Activated CD4-positive, alpha-beta memory T cell treated with anti-CD3 and anti-CD28 coated beads, Interleukin-2, amount 10 ng/mL, durations not matched to agents 7 days and 5 days (primary cell): ENCODE measurements at regions of chr9 and their contacts with region 1.

Region 1: GRCh38 chr9:137034863-137035761 is 3.2 kb upstream of the FUT7 start:
- DNase-seq: peak; percentile 90
- H3K4me3 Mint-ChIP-seq: peak overlapping the region; percentile 64
- H3K27ac Mint-ChIP-seq: peak overlapping the region; percentile 98
- H3K4me1 Mint-ChIP-seq: peaks cover 48% of the 10 kb centered on the region
- H3K27me3 Mint-ChIP-seq: no peaks in the 10 kb centered on the region

Region 2: GRCh38 chr9:136327313-136327974 is 707.7 kb before region 1 on chr9 and contains the start of gene GPSM1:
- CTCF ChIA-PET with region 1: no interaction called
- POLR2A ChIA-PET with region 1: no interaction called
- DNase-seq: peak; percentile 32
- H3K4me3 Mint-ChIP-seq: peak within 1 kb of the TSS; percentile 51
- H3K27ac Mint-ChIP-seq: no peak within 1 kb of the TSS
- H3K4me1 Mint-ChIP-seq: peaks cover 5% of the 10 kb centered on the region
- H3K27me3 Mint-ChIP-seq: no peaks in the 10 kb centered on the region
- total RNA-seq, gene GPSM1: 6.0 to 6.5 TPM

Region 3: DNA sequence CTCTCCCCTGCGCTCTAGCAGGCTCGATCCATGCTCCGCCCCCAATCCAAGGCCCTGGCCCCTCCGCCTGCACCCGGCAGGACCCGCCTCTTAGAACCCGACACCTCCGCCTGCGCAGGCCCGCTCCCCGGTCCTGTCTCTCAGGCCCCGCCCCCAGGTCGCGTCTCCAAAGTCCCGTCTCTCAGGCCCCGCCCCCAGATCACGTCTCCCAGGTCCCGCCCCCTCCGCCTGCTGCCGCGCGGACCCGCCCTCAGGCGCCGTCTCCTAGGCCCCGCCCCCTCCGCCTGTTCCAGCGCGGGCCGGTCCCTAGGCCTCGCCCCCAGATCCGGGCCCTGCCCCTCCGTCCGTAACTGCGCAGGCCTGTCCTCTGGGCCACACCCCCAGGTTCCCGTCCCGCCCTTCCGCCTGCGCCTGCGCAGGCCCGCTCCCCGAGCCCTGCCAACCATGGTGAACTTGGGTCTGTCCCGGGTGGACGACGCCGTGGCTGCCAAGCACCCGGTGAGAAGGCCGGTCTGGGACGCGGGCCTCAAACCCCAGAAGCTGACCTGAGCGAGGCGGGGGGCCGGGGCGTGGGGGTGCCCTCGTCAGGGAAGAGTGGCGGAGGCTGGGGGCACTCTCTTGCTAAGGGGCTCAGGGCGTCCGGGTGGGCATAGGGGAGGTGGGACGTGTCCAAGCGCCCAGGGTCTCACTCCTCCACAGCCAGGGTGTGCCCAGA is 244.0 kb before region 1 on chr9 and contains the start of gene TMEM141:
- CTCF ChIA-PET with region 1: interaction called, 20 read pairs
- POLR2A ChIA-PET with region 1: interaction called, 4 read pairs
- DNase-seq: peak; percentile 100
- H3K4me3 Mint-ChIP-seq: peak within 1 kb of the TSS; percentile 77
- H3K27ac Mint-ChIP-seq: peak within 1 kb of the TSS; percentile 89
- H3K4me1 Mint-ChIP-seq: peaks cover 36% of the 10 kb centered on the region
- H3K27me3 Mint-ChIP-seq: peaks cover 6% of the 10 kb centered on the region
- total RNA-seq, gene TMEM141: 39.6 to 42.9 TPM

Region 4: DNA sequence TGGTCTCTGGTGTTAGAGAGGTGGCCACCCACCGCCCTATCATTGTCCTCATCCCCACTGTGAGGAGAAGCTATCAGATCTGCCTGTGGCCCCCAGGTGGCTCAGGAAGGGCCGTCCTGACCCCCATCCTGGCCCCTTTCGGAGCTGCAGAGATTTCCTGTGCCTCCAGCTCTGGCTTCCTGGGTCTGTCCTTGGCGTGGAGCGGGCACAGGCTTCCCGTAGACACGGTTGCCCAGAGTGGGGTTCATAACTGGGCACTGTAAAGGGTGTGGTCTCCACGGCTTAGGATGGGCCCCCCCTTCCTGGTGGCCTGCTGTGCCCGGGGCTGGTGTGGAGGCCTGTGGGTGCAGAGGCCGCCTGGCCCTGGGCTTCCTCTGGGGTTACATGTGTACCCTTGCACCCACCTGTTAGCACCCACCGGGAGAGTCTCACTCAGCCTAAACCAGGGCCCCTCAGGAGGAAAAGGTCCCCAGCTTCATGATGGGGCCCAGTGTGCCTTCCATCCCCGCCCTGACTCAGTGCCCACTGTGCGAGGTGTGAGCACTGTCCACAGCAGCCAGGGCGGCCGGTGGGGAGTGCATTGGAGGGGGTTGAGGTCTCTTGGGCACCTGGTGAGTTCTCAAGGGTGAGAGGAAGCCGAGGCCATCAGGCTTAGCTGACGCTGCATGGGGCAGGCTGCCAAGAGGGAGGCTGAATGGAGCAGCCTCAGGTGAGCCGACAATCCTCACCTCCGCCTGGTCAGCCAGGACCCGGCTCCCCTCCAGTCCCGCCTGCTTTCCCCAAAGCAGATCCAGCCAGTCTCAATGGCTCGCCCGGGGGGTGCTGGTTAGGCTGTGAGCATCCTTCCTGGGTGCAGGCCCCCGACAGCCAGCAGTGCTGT is 208.2 kb before region 1 on chr9:
- CTCF ChIA-PET with region 1: no interaction called
- POLR2A ChIA-PET with region 1: no interaction called
- DNase-seq: no peak
- H3K4me3 Mint-ChIP-seq: no peak overlapping the region
- H3K27ac Mint-ChIP-seq: no peak overlapping the region
- H3K4me1 Mint-ChIP-seq: no peaks in the 10 kb centered on the region
- H3K27me3 Mint-ChIP-seq: no peaks in the 10 kb centered on the region

Region 5: DNA sequence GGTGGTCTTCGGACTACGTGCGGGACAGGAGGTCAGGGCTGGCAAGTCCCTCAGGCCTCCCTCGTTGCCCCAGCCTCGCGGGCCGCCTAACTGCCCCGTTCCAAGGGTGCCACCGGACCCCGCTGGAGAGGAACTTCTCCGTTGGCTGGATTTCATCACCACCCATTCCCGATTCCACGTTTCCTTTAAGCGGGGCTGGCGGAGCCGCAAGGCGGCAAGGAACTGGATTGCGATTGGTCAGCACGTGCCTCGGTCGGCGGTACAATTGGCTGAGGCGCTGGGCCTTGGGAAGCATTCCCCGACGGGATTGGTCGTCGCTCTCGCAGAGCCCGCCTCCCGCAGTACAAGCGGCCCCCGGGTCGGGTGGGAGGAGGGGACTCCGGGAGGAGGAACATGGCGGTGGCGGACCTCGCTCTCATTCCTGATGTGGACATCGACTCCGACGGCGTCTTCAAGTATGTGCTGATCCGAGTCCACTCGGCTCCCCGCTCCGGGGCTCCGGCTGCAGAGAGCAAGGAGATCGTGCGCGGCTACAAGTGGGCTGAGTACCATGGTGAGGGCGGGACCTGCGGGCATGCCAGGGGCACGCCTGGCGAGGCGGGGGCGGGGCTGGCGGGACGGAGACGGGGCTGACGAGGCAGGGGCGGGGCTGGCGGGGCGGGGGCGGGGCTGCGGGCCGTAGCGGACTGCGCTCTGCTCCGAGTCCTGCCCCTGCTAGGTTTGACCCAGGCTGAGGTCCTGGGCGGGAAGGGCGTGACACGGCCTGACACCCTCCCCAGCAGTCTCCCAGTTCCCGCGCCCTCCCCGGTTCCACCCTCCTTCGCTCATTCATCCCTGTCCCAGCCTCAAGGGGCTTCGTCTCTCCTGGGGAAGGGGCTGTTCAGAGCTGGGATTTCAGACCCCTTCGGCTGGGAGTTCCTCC is 185.8 kb before region 1 on chr9 and contains the start of gene PHPT1:
- CTCF ChIA-PET with region 1: interaction called, 25 read pairs
- POLR2A ChIA-PET with region 1: interaction called, 5 read pairs
- DNase-seq: peak; percentile 97
- H3K4me3 Mint-ChIP-seq: peak within 1 kb of the TSS; percentile 93
- H3K27ac Mint-ChIP-seq: peak within 1 kb of the TSS; percentile 85
- H3K4me1 Mint-ChIP-seq: peaks cover 21% of the 10 kb centered on the region
- H3K27me3 Mint-ChIP-seq: peaks cover 18% of the 10 kb centered on the region
- total RNA-seq, gene PHPT1: 82.3 to 85.4 TPM

Region 6: GRCh38 chr9:136949817-136950655 is 85.1 kb before region 1 on chr9:
- CTCF ChIA-PET with region 1: interaction called, 149 read pairs
- POLR2A ChIA-PET with region 1: interaction called, 11 read pairs
- DNase-seq: peak; percentile 98
- H3K4me3 Mint-ChIP-seq: peak overlapping the region; percentile 81
- H3K27ac Mint-ChIP-seq: peak overlapping the region; percentile 79
- H3K4me1 Mint-ChIP-seq: peaks cover 12% of the 10 kb centered on the region
- H3K27me3 Mint-ChIP-seq: no peaks in the 10 kb centered on the region

Region 7: DNA sequence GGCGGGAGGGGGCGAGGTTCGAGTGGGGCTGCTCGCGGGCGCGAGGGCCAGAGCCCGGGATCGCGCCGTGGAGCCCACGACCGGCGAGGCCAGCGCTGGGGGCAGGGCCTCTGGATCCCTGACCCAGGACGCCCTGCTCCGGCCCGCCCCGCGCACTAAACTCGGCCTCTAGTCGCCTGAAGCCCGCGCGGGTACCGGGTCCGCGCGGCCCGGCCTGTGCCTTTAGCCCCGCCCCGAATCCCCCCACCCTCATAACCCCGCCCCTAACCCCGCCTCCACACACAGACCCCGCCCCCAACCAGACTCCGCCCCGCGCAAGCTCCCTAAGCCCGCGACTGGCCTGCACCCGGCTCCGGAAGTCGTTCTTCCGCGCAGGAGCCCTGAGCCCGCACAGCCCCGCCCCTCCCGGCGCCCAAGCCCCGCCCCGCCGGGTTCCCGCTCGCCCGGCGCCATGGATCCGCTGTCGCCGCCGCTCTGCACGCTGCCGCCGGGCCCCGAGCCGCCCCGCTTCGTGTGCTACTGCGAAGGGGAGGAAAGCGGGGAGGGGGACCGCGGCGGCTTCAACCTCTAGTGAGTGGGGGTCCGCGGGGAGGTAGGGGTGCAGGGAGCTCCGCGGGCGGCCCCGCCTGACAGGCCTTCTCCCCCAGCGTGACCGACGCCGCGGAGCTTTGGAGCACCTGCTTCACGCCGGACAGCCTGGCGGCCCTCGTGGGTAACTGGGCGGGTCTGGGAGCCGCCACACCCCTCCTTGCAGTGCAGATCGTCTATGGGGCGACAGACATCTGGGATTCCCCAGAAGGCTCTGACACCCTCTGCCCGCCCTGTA is 42.9 kb before region 1 on chr9 and contains the start of gene PAXX:
- CTCF ChIA-PET with region 1: interaction called, 26 read pairs
- POLR2A ChIA-PET with region 1: interaction called, 15 read pairs
- DNase-seq: peak; percentile 95
- H3K4me3 Mint-ChIP-seq: peak within 1 kb of the TSS; percentile 78
- H3K27ac Mint-ChIP-seq: peak within 1 kb of the TSS; percentile 81
- H3K4me1 Mint-ChIP-seq: peaks cover 36% of the 10 kb centered on the region
- H3K27me3 Mint-ChIP-seq: peaks cover 27% of the 10 kb centered on the region
- total RNA-seq, gene PAXX: 64.4 to 68.5 TPM

Region 8: GRCh38 chr9:137046098-137046787 is 11.1 kb after region 1 on chr9 and contains the start of gene NPDC1:
- CTCF ChIA-PET with region 1: interaction called, 46 read pairs
- POLR2A ChIA-PET with region 1: interaction called, 12 read pairs
- DNase-seq: peak; percentile 86
- H3K4me3 Mint-ChIP-seq: peak within 1 kb of the TSS; percentile 76
- H3K27ac Mint-ChIP-seq: peak within 1 kb of the TSS; percentile 65
- H3K4me1 Mint-ChIP-seq: peaks cover 29% of the 10 kb centered on the region
- H3K27me3 Mint-ChIP-seq: peaks cover 33% of the 10 kb centered on the region
- total RNA-seq, gene NPDC1: 82.8 to 89.2 TPM